ENCODE measurements at regions of chr11 and their contacts with region 1.

Region 1: GRCh38 chr11:10933455-10934292 is 75.8 kb upstream of the ZBED5 start:
- DNase-seq: peak; percentile 77 to 79
- H3K4me3 ChIP-seq: peak overlapping the region; percentile 60
- H3K27ac ChIP-seq: no peak overlapping the region; the same call in 1 of the 2 replicates
- H3K4me1 ChIP-seq: peaks cover 9% of the 10 kb centered on the region; the same call in 1 of the 2 replicates
- H3K27me3 ChIP-seq: no peaks in the 10 kb centered on the region
- CTCF ChIP-seq: peak; percentile 85

Region 2: DNA sequence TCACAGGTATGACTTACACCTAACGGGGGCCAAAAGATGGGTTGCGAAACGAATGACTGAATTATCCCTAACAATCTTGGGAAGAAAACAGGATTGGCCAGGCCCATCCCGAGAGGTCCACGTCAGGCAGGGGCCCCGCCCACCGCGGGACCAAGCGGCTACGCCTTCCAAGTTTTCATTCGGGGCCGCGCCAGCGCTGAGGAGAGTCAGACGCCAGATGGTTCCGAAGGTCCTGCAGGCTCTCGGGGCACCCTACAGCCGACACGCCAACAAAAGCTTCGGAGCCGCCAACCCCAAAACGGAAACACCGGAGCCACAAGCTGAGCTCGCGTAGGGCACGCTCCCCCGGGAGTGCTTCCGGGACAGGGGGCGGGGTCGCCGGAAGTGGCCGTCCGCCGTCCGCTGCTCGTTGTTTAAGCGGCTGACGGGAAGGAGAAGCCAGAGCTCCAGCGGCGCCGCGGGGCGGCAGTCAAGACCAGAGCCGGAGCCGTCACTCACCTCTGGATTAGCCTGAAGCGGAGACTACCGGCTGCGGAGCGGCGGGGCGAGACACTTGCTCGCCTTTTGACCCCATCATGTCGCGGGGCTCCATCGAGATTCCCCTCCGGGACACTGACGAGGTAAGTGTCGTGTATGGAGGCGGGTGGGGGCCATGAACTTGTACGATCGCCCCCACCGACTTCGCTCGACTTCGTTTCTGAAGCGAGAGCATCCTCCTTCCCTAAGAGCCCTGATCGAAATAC is 182.7 kb before region 1 on chr11 and contains the start of gene CTR9:
- CTCF ChIA-PET with region 1: no interaction called
- POLR2A ChIA-PET with region 1: no interaction called
- intact Hi-C with region 1: no loop called
- DNase-seq: peak; percentile 81 to 91
- H3K4me3 ChIP-seq: peak within 1 kb of the TSS; percentile 81
- H3K27ac ChIP-seq: peak within 1 kb of the TSS; percentile 88
- H3K4me1 ChIP-seq: peaks cover 18% of the 10 kb centered on the region
- H3K27me3 ChIP-seq: no peaks in the 10 kb centered on the region
- CTCF ChIP-seq: no peak; the same call in 1 of the 2 replicates
- total RNA-seq, gene CTR9: 11.1 and 19.7 TPM in 2 replicates

Region 3: GRCh38 chr11:10792398-10792975 is 141.2 kb before region 1 on chr11:
- CTCF ChIA-PET with region 1: interaction called, 9 read pairs
- POLR2A ChIA-PET with region 1: no interaction called
- intact Hi-C with region 1: loop called (anchors 5 kb)
- DNase-seq: peak; percentile 69 to 85
- H3K4me3 ChIP-seq: no peak overlapping the region
- H3K27ac ChIP-seq: no peak overlapping the region
- H3K4me1 ChIP-seq: no peaks in the 10 kb centered on the region
- H3K27me3 ChIP-seq: no peaks in the 10 kb centered on the region
- CTCF ChIP-seq: peak; percentile 85

Region 4: GRCh38 chr11:10857709-10858438 is 75.8 kb before region 1 on chr11 and contains the start of gene ZBED5:
- CTCF ChIA-PET with region 1: no interaction called
- POLR2A ChIA-PET with region 1: interaction called, 10 read pairs
- intact Hi-C with region 1: loop called (anchors 1 kb)
- DNase-seq: peak; percentile 88 to 91
- H3K4me3 ChIP-seq: peak within 1 kb of the TSS; percentile 96
- H3K27ac ChIP-seq: peak within 1 kb of the TSS; percentile 82
- H3K4me1 ChIP-seq: peaks cover 21% of the 10 kb centered on the region
- H3K27me3 ChIP-seq: no peaks in the 10 kb centered on the region
- CTCF ChIP-seq: no peak; the same call in 1 of the 2 replicates
- total RNA-seq, gene ZBED5: 14.7 and 21.5 TPM in 2 replicates

Region 5: GRCh38 chr11:10878408-10879214 is 55.1 kb before region 1 on chr11:
- CTCF ChIA-PET with region 1: no interaction called
- POLR2A ChIA-PET with region 1: no interaction called
- intact Hi-C with region 1: no loop called
- DNase-seq: no peak
- H3K4me3 ChIP-seq: no peak overlapping the region
- H3K27ac ChIP-seq: no peak overlapping the region
- H3K4me1 ChIP-seq: peaks cover 22% of the 10 kb centered on the region; the same call in 1 of the 2 replicates
- H3K27me3 ChIP-seq: no peaks in the 10 kb centered on the region
- CTCF ChIP-seq: no peak; the same call in 1 of the 2 replicates

Region 6: GRCh38 chr11:10899121-10899830 is 34.4 kb before region 1 on chr11:
- CTCF ChIA-PET with region 1: no interaction called
- POLR2A ChIA-PET with region 1: interaction called, 4 read pairs
- intact Hi-C with region 1: loop called (anchors 1 kb)
- DNase-seq: peak; percentile 44 to 57
- H3K4me3 ChIP-seq: peak overlapping the region; percentile 48
- H3K27ac ChIP-seq: peak overlapping the region; percentile 98
- H3K4me1 ChIP-seq: peaks cover 61% of the 10 kb centered on the region
- H3K27me3 ChIP-seq: no peaks in the 10 kb centered on the region
- CTCF ChIP-seq: no peak

Region 7: DNA sequence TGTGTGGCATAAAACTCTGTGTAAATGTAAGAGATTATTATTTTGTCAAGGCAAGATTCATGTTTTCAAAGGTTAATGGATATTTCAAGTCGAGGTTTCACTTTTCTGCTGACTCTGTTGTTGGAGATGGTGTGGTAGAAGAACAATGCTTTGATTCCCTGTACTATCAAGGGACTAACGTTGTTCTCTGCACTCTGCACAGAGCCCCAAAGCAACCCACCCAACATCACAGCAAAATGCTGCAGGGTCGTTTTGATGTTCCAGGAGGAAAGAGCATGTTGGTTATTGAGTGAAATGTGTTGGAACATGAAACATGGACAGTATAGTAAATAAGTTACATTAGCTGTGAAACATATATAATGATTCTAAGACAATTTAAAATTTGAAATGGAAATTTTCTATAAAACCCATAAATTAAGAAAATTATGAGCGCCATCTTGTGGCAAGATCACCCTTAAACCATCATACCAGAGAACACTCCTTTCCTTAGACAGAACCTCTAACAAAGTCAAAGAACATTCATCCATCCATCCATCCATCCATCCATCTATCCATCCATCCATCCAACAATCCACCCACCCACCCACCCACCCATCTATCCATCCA is 88.6 kb after region 1 on chr11:
- CTCF ChIA-PET with region 1: interaction called, 6 read pairs
- POLR2A ChIA-PET with region 1: no interaction called
- intact Hi-C with region 1: loop called (anchors 2 kb)
- DNase-seq: no peak
- H3K4me3 ChIP-seq: no peak overlapping the region
- H3K27ac ChIP-seq: no peak overlapping the region
- H3K4me1 ChIP-seq: no peaks in the 10 kb centered on the region
- H3K27me3 ChIP-seq: no peaks in the 10 kb centered on the region
- CTCF ChIP-seq: peak; percentile 61

Region 8: DNA sequence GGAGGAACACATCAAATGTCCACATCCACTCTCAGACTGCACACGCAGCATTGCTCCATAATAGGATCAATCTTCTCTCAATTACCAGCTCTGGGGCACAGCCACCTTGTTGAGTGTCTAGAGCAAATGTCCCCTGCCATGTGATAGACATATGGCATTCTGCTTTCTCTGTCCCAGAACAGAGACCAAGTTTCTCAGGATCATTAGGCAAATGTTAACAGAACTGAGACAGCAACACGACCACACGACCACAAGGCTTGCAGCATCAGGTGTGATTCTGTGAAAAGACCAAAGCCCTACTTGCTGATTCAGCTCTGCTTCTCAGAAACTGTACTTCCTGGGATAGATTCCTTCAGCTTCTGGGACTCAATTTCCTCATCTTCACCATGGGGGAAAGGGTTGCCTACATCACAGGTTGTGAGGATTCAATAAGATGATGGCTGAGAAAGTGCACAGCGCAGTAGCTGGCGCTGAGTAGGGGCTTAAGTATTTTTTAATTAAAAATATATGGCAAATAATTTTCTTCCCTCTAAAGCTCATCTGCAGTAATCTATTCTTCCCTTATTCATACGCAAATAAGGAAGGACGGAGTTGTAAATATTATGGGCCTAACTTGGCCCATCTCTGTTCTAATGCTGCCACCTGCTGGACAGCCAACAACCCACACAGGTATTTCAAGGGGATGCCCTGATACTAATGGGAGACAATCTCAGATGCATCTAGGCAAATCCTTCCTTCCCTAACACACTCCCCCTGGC is 853.8 kb after region 1 on chr11:
- CTCF ChIA-PET with region 1: interaction called, 5 read pairs
- POLR2A ChIA-PET with region 1: no interaction called
- intact Hi-C with region 1: loop called (anchors 5 kb)
- DNase-seq: peak; percentile 41 to 46
- H3K4me3 ChIP-seq: no peak overlapping the region
- H3K27ac ChIP-seq: no peak overlapping the region
- H3K4me1 ChIP-seq: no peaks in the 10 kb centered on the region
- H3K27me3 ChIP-seq: peaks cover 10% of the 10 kb centered on the region; the same call in 1 of the 2 replicates
- CTCF ChIP-seq: peak; percentile 79